Mammary epithelial cell (primary cell): ENCODE measurements at regions of chr10 and their contacts with region 1.

Region 1: DNA sequence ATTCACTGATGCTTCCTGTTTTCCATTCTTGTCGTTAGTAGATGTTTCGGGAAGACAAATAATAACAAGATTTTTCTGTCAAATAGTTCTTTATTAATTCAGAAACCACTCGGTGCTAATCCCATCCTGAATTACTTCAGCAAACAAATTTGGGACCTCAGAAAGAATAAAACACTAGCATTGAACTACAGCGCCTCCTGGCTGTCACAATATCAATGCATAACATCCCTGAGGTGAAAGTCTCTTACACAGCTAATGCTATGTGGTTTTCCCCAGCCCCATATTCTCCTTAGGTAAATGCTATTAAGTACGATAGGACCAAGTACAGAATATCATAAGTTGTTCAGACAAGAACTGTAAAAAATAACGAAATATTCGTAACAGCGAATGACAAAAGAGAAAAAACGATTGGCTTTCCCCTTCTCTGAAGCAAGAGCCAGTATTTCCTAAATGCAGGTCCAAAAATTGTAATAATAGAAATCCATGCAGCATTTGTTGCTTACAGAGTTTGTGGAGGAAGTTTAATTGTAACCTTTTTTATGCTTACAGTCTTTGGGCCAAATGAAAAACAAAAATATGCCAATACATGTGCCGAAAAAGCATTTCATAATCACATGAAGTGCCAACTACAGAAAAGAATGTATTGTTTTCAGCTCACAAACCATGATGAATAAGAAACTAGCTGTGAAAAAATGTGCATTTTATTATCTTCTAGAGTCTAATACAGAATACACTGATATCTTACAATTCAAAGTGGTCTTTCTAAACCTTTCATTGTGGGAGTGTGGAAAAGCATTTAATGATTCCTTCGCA is 47.3 kb downstream of the MYPN start:
- DNase-seq: peak; percentile 43
- H3K4me3 ChIP-seq: no peak overlapping the region
- H3K27ac ChIP-seq: no peak overlapping the region
- H3K4me1 ChIP-seq: peaks cover 14% of the 10 kb centered on the region
- H3K27me3 ChIP-seq: no peaks in the 10 kb centered on the region
- CTCF ChIP-seq: peak; percentile 84 to 97

Region 2: GRCh38 chr10:67452892-67453291 is 703.7 kb before region 1 on chr10:
- CTCF ChIA-PET with region 1: no interaction called
- dilution Hi-C with region 1: no loop called
- in situ Hi-C with region 1: no loop called
- intact Hi-C with region 1: no loop called
- DNase-seq: no peak
- H3K4me3 ChIP-seq: no peak overlapping the region
- H3K27ac ChIP-seq: no peak overlapping the region
- H3K4me1 ChIP-seq: no peaks in the 10 kb centered on the region
- H3K27me3 ChIP-seq: no peaks in the 10 kb centered on the region
- CTCF ChIP-seq: no peak

Region 3: GRCh38 chr10:67666416-67667034 is 490.1 kb before region 1 on chr10:
- CTCF ChIA-PET with region 1: no interaction called
- dilution Hi-C with region 1: no loop called
- in situ Hi-C with region 1: no loop called
- intact Hi-C with region 1: loop called (anchors 5 kb)
- DNase-seq: peak; percentile 6
- H3K4me3 ChIP-seq: no peak overlapping the region
- H3K27ac ChIP-seq: no peak overlapping the region
- H3K4me1 ChIP-seq: no peaks in the 10 kb centered on the region
- H3K27me3 ChIP-seq: no peaks in the 10 kb centered on the region
- CTCF ChIP-seq: peak; percentile 38 to 42

Region 4: GRCh38 chr10:68082872-68083271 is 73.7 kb before region 1 on chr10:
- CTCF ChIA-PET with region 1: no interaction called
- dilution Hi-C with region 1: no loop called
- in situ Hi-C with region 1: loop called (anchors 5 kb)
- intact Hi-C with region 1: loop called (anchors 1 kb)
- DNase-seq: no peak
- H3K4me3 ChIP-seq: no peak overlapping the region
- H3K27ac ChIP-seq: no peak overlapping the region
- H3K4me1 ChIP-seq: peaks cover 29% of the 10 kb centered on the region
- H3K27me3 ChIP-seq: no peaks in the 10 kb centered on the region
- CTCF ChIP-seq: peak; percentile 56 to 64

Region 5: GRCh38 chr10:68096913-68097503 is 59.6 kb before region 1 on chr10:
- CTCF ChIA-PET with region 1: no interaction called
- dilution Hi-C with region 1: no loop called
- in situ Hi-C with region 1: no loop called
- intact Hi-C with region 1: loop called (anchors 2 kb)
- DNase-seq: peak; percentile 94
- H3K4me3 ChIP-seq: no peak overlapping the region
- H3K27ac ChIP-seq: peak overlapping the region; percentile 50
- H3K4me1 ChIP-seq: peaks cover 62% of the 10 kb centered on the region
- H3K27me3 ChIP-seq: no peaks in the 10 kb centered on the region
- CTCF ChIP-seq: no peak

Region 6: GRCh38 chr10:68110027-68110426 is 46.6 kb before region 1 on chr10:
- CTCF ChIA-PET with region 1: no interaction called
- dilution Hi-C with region 1: no loop called
- in situ Hi-C with region 1: no loop called
- intact Hi-C with region 1: no loop called
- DNase-seq: no peak
- H3K4me3 ChIP-seq: no peak overlapping the region
- H3K27ac ChIP-seq: no peak overlapping the region
- H3K4me1 ChIP-seq: peaks cover 20% of the 10 kb centered on the region
- H3K27me3 ChIP-seq: no peaks in the 10 kb centered on the region
- CTCF ChIP-seq: no peak

Region 7: GRCh38 chr10:68192113-68192512 is 35.5 kb after region 1 on chr10:
- CTCF ChIA-PET with region 1: no interaction called
- dilution Hi-C with region 1: loop called (anchors 5 kb)
- in situ Hi-C with region 1: no loop called
- intact Hi-C with region 1: no loop called
- DNase-seq: peak; percentile 55
- H3K4me3 ChIP-seq: no peak overlapping the region
- H3K27ac ChIP-seq: no peak overlapping the region
- H3K4me1 ChIP-seq: peaks cover 7% of the 10 kb centered on the region
- H3K27me3 ChIP-seq: no peaks in the 10 kb centered on the region
- CTCF ChIP-seq: no peak

Region 8: GRCh38 chr10:68271196-68271882 is 114.8 kb after region 1 on chr10:
- CTCF ChIA-PET with region 1: no interaction called
- dilution Hi-C with region 1: no loop called
- in situ Hi-C with region 1: no loop called
- intact Hi-C with region 1: no loop called
- DNase-seq: no peak
- H3K4me3 ChIP-seq: no peak overlapping the region
- H3K27ac ChIP-seq: no peak overlapping the region
- H3K4me1 ChIP-seq: no peaks in the 10 kb centered on the region
- H3K27me3 ChIP-seq: no peaks in the 10 kb centered on the region
- CTCF ChIP-seq: no peak

Region 9: GRCh38 chr10:68901104-68901927 is 744.7 kb after region 1 on chr10 and contains the start of gene DDX50:
- CTCF ChIA-PET with region 1: no interaction called
- dilution Hi-C with region 1: no loop called
- in situ Hi-C with region 1: no loop called
- intact Hi-C with region 1: loop called (anchors 5 kb)
- DNase-seq: peak; percentile 99
- H3K4me3 ChIP-seq: peak within 1 kb of the TSS; percentile 68 to 94 (median 77)
- H3K27ac ChIP-seq: peak within 1 kb of the TSS; percentile 93
- H3K4me1 ChIP-seq: peaks cover 17% of the 10 kb centered on the region
- H3K27me3 ChIP-seq: no peaks in the 10 kb centered on the region
- CTCF ChIP-seq: no peak
- total RNA-seq, gene DDX50: 30.0 to 39.8 TPM